ENCODE measurements at regions of chr9 and their contacts with region 1.

Region 1: DNA sequence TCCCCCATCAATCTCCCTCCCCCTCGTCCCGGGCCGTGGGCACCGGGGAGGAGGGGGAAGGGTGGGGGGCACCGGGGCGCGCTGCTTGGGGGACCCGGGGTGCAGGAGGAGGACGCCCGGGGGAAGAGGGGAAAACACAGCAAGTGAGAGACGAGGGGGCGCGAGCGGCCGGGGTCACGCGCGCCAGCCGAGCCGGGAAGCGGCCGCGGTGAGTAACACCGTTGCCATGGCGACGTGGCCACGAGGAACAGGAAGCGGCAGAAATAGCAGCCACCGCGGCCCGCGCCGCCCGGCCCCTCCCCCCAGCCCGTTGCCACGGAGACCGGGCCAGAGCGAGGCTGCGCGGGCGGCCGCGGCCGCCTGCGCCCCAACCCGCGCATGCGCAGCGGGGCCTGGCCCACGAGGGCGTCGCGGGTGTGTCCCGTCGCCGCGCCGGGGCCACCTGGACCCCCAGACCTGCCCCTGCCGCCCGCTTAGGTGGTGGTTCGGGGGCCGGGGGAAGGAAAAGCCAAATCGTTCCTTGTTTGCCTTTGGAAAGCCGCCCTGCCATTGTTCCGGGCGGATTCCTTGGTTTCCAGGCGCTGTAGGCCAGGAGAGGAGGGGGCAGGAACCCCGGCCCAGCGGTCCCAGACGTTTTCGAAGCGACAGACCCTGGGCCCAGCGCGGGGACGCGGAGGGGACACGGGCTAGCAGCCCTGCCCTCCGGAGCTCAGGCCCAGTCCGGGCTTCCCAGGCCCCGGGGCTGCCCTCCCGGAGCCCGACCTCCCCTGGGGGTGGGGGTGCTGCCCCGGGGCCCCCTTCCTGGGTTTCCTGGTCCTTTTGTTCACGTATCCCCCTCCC is 207.1 kb downstream of the C9orf50 start:
- DNase-seq: peak; percentile 99
- H3K4me3 ChIP-seq: peak overlapping the region; percentile 64 to 74 (median 70)
- H3K27ac ChIP-seq: peak overlapping the region; percentile 95 to 100 (median 98)
- H3K4me1 ChIP-seq: peaks cover 31 to 53% (median 36%) of the 10 kb centered on the region in 4 donors
- H3K27me3 ChIP-seq: no peaks in the 10 kb centered on the region
- CTCF ChIP-seq: peak in 1 of 3 experiments; percentile 16
- EP300 ChIP-seq: no peak
- POLR2A ChIP-seq: peak; percentile 69

Region 2: DNA sequence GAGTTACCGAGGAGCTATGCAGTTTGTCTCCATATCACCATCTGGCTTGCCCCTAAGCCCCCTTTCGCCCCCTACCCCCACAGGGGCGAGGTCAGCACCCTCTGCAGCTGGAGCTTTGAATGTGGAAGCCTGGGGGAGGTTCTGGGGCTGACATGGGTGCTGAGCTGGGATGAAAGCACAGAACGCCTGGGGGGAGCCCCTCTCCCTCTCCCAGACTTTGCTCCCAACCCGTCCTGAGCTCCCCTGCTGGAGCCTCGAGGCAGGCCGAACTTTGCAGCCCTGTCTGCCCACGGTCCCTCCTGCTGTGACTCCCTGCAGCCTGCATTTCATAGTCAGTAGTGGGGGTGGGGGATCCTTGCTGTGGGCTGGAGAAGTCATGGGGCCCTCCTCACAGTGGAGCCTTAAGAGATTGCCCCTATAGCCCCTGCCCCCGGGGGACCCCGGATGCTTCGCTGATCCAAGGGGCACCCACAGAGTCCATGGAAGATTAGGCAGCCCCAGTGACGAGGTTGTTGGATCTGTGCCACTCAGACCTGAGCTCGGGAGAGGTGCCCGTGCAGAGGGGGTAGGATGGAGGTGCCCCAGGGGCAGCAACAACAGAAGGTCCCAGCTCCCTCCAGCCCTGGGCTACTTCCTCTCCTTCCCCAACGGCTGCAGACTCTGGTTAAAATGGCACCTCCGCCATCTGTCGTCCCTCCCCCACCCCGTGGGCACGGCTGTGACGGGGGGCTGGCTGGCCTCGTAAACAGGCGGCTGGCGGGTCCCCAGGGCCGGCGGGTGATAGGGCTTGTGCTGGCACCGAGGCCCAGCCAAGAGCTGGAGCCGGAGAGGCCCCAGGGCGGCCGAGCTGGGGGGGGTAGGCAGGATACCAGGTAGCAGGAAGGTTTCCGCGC is 45.2 kb after region 1 on chr9:
- intact Hi-C with region 1: loop called (anchors 5 kb)
- DNase-seq: no peak
- H3K4me3 ChIP-seq: no peak overlapping the region
- H3K27ac ChIP-seq: peak overlapping the region; percentile 90 to 97 (median 94)
- H3K4me1 ChIP-seq: peaks cover 37 to 55% (median 49%) of the 10 kb centered on the region in 4 donors
- H3K27me3 ChIP-seq: no peaks in the 10 kb centered on the region
- CTCF ChIP-seq: no peak
- EP300 ChIP-seq: no peak
- POLR2A ChIP-seq: no peak

Measured in esophagus muscularis mucosa (tissue), 4 donors.